Left cardiac atrium (tissue), 4 donors: ENCODE measurements at regions of chr2 and their contacts with region 1.

Region 1: GRCh38 chr2:237154082-237154638 is 68.5 kb downstream of the COPS8 start:
- DNase-seq: no peak
- ATAC-seq: peak in 1 of 2 donors; percentile 19

Region 2: GRCh38 chr2:237413777-237414661 is 259.9 kb after region 1 on chr2 and contains the start of gene COL6A3:
- intact Hi-C with region 1: loop called in 1 of 2 experiments (anchors 5 kb)
- DNase-seq: peak; percentile 78
- ATAC-seq: peak; percentile 66 to 79
- total RNA-seq, gene COL6A3: 145 to 186 TPM